Activated naive CD4-positive, alpha-beta T cell treated with anti-CD3 and anti-CD28 coated beads for 36 hours (primary cell): ENCODE measurements at regions of chr2 and their contacts with region 1.

Region 1: DNA sequence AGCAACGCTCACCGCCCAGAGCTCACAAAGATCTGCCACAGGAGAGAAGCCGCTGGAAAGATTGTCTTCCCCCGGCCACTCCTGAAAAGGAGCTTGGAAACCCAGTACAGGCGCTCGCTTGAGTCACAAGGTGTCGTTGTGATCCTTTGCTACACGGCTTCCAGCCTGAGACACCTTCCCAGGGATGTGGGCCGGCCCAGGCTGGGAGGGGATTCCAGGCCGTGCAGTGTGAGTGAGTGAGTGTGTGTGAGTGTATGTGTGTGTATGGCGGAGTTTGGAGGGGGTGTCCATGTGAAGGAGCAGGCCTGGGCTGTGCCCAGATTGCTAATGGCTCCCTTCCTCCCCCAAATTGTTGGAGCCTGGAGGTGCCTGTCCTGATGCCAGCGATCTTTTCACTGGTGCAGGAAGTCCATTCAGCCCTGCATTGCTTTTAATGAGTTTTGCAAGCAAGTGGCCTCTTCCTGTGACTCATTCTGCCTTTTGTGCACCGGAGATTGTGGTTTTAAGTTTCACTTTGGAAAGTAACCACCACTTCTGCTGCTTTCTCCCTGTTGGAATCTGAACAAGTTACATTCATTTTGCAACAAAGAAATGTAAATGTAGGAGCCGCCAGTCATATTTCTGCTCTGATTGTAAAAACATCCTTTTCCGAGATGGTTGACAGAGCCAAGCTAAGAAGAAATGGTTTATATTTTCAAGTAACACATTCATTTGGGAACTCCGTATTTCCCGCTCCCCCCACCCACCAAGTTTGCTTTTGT is 83.7 kb downstream of the LPIN1 start:
- DNase-seq: peak; percentile 80
- H3K4me3 Mint-ChIP-seq: peak overlapping the region; percentile 1
- H3K27ac Mint-ChIP-seq: peak overlapping the region; percentile 10
- H3K4me1 Mint-ChIP-seq: peaks cover 42% of the 10 kb centered on the region
- H3K27me3 Mint-ChIP-seq: no peaks in the 10 kb centered on the region

Region 2: GRCh38 chr2:11160731-11161455 is 669.2 kb before region 1 on chr2:
- CTCF ChIA-PET with region 1: no interaction called
- intact Hi-C with region 1: no loop called
- DNase-seq: peak; percentile 30
- H3K4me3 Mint-ChIP-seq: peak overlapping the region; percentile 27
- H3K27ac Mint-ChIP-seq: peak overlapping the region; percentile 83
- H3K4me1 Mint-ChIP-seq: peaks cover 19% of the 10 kb centered on the region
- H3K27me3 Mint-ChIP-seq: no peaks in the 10 kb centered on the region

Region 3: GRCh38 chr2:11688222-11689069 is 141.7 kb before region 1 on chr2:
- CTCF ChIA-PET with region 1: interaction called, 3 read pairs
- intact Hi-C with region 1: loop called (anchors 2 kb)
- DNase-seq: peak; percentile 89
- H3K4me3 Mint-ChIP-seq: peak overlapping the region; percentile 32
- H3K27ac Mint-ChIP-seq: no peak overlapping the region
- H3K4me1 Mint-ChIP-seq: peaks cover 10% of the 10 kb centered on the region
- H3K27me3 Mint-ChIP-seq: peaks cover 5% of the 10 kb centered on the region

Region 4: GRCh38 chr2:11945139-11946126 is 115.3 kb after region 1 on chr2:
- CTCF ChIA-PET with region 1: no interaction called
- intact Hi-C with region 1: loop called (anchors 1 kb)
- DNase-seq: peak; percentile 32
- H3K4me3 Mint-ChIP-seq: peak overlapping the region; percentile 15
- H3K27ac Mint-ChIP-seq: no peak overlapping the region
- H3K4me1 Mint-ChIP-seq: peaks cover 13% of the 10 kb centered on the region
- H3K27me3 Mint-ChIP-seq: no peaks in the 10 kb centered on the region

Region 5: DNA sequence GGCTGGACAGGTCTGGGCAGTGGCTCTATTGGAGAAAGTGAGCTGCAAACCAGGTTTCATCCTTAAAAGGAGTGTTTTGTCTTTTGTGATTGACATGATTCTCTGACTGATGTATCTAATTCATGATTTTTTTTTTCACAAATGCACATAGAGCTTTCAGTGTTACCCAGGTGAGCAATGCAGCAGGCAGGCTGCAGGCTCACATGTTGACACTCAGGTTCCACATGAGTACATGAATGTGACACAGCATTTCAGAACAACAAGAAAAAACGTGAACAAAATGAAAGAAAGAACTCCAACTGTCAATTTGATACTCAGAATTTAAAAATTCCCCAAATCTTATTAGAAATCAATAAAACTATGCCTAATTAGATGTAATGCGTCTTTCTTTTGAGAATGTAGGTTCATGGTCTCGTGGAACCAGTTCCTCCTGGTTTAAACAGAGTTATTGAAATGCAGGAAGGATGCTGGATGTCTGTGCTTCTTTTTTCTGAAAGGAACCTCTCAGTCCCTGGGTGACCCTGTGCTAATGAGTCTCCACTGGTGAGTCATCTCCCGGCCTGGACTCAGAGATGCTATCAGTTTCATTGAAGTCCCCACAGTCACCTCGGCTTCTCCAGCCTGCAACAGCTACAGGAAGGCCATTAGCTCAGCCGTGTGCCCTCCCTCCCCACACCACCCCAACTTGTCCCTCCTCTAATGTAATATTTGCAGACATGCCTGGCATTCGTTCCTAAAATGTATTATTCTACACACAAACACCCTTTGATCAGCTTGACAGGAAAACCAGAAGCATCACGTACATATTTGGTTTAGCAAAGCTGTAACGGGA is 346.7 kb after region 1 on chr2:
- CTCF ChIA-PET with region 1: no interaction called
- intact Hi-C with region 1: loop called (anchors 2 kb)
- DNase-seq: peak; percentile 49
- H3K4me3 Mint-ChIP-seq: peak overlapping the region; percentile 11
- H3K27ac Mint-ChIP-seq: no peak overlapping the region
- H3K4me1 Mint-ChIP-seq: peaks cover 40% of the 10 kb centered on the region
- H3K27me3 Mint-ChIP-seq: no peaks in the 10 kb centered on the region

Region 6: DNA sequence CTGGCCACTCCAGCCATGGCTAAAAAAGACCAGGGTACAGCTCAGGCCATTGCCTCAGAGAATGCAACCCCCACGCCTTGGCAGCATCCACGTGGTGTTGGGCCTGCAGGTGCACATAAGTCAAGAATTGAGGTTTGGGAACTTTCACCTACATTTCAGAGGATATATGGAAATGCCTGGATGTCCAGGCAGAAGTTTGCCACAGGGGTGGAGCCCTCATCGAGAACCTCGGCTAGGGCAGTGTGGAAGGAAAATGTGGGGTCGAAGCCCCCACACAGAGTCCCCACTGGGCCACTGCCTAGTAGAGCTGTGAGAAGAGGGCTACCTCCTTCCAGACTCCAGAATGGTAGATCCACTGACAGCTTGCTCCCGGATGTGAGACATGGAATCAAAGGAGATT is 393.6 kb after region 1 on chr2:
- CTCF ChIA-PET with region 1: no interaction called
- intact Hi-C with region 1: no loop called
- DNase-seq: peak; percentile 10
- H3K4me3 Mint-ChIP-seq: no peak overlapping the region
- H3K27ac Mint-ChIP-seq: no peak overlapping the region
- H3K4me1 Mint-ChIP-seq: no peaks in the 10 kb centered on the region
- H3K27me3 Mint-ChIP-seq: no peaks in the 10 kb centered on the region

Region 7: GRCh38 chr2:12430407-12431133 is 600.4 kb after region 1 on chr2:
- CTCF ChIA-PET with region 1: no interaction called
- intact Hi-C with region 1: loop called (anchors 5 kb)
- DNase-seq: peak; percentile 36
- H3K4me3 Mint-ChIP-seq: no peak overlapping the region
- H3K27ac Mint-ChIP-seq: no peak overlapping the region
- H3K4me1 Mint-ChIP-seq: peaks cover 30% of the 10 kb centered on the region
- H3K27me3 Mint-ChIP-seq: no peaks in the 10 kb centered on the region

Region 8: DNA sequence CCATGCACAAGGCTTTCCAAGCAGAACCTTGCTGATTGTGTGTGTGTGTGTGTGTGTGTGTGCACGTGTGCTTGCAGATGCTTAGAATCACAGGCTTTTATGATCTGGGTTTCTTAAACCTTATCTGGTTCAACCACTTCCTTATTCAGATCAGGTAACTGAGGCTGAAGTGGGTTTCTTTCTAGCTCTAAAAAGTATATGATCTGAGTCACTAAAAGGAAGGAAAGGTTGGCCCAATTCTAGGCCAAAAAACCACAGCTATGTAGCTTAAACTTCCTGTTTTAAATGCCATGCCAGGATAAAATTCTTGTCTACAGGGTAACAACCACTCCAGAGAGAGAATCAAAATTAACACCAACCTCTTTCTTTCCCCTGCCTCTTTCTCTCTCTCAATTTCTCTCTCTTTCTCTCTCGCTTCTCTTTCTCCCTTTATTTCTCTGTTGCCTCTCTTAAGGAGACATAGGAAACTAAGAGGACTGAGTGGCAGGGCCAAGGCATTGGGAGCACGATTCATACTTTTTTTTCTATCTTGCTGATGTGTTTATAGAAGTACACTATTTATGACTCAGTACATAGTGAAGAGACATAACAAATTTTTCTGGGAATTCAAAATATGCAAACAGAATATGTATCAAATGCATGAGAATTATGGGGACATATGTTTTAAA is 1026.9 kb after region 1 on chr2:
- CTCF ChIA-PET with region 1: no interaction called
- intact Hi-C with region 1: loop called (anchors 1 kb)
- DNase-seq: peak; percentile 31
- H3K4me3 Mint-ChIP-seq: no peak overlapping the region
- H3K27ac Mint-ChIP-seq: no peak overlapping the region
- H3K4me1 Mint-ChIP-seq: peaks cover 22% of the 10 kb centered on the region
- H3K27me3 Mint-ChIP-seq: no peaks in the 10 kb centered on the region

Region 9: DNA sequence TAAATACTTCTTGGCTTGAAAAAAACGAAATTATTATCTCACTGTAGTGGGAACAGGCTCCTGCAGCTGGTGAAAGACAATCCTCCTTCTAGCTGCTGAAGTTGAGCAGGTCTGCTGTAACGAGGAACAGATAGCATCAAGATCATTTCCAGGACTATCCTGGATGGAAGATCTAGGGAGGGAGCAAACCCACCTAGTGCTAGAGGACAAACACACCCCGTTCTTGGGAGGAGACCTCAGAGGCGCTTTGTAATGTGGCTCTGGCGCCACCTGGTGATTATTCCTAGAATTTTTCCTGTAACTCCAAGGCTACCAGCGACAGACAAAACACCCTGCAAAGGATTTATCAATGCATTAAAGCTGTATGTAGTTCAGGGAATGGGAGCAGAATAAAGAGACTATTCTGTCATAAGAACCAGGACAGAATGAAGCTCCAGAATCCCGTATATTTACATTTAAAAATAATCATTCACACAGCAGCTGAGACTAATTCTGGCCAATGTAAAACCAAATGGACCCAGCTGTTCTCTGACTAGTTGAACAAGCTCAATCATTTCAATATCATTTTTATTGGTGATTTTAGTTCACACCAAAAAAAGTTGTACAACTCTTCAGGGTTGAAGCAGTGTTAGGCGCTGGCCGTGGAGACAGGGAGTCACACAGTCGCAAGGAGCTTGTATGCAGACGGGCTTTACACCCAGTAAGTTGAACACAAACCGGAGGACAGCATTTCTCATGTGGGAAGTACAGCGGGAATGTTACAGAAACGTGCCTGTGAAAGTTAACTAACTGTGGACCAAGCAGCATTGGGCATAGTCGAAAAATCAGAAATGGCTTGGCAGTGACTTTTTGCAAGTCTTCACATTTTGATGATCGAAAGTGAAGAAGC is 1176.9 kb after region 1 on chr2:
- CTCF ChIA-PET with region 1: interaction called, 8 read pairs
- intact Hi-C with region 1: loop called (anchors 1 kb)
- DNase-seq: peak; percentile 72
- H3K4me3 Mint-ChIP-seq: no peak overlapping the region
- H3K27ac Mint-ChIP-seq: no peak overlapping the region
- H3K4me1 Mint-ChIP-seq: no peaks in the 10 kb centered on the region
- H3K27me3 Mint-ChIP-seq: peaks cover 9% of the 10 kb centered on the region